PC-3 (cell line): ENCODE measurements at regions of chr14 and their contacts with region 1.

Region 1: DNA sequence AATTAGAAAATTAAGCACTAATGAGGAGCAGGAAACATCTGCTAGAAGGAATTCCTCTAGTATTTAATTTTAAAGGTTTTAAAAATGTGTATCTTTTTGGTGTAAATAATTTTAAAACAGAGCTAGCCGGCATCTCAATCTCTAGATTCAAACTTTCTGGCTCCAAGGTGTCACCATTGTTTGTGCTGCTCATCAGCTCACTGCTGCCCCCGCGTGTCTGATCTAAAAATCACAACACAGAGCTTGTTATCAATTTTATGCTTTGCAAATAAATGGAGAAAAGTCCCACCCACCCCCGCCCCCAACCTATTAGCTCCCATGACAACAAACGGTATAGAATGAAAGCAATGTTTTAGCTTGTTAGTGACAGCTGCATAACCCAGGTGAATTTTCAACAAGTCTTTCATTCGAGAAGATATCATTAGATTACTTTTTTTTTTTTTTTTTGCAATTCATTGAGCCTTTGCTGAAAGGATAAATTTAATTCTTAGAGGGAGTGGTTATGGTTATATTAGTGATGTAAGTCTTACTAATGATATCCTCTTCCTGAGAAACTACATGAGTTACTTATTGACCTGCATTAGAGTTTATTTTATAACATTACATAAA is 11.3 kb upstream of the ABHD12B start:
- DNase-seq: peak; percentile 96
- ATAC-seq: peak; percentile 66
- H3K4me3 ChIP-seq: peak overlapping the region; percentile 82
- H3K27ac ChIP-seq: peak overlapping the region; percentile 34
- H3K4me1 ChIP-seq: peaks cover 13% of the 10 kb centered on the region
- H3K27me3 ChIP-seq: no peaks in the 10 kb centered on the region
- CTCF ChIP-seq: peak; percentile 72; the same call in 1 of the 2 replicates

Region 2: GRCh38 chr14:50608302-50608851 is 252.2 kb before region 1 on chr14:
- CTCF ChIA-PET with region 1: interaction called, 21 read pairs
- POLR2A ChIA-PET with region 1: no interaction called
- intact Hi-C with region 1: no loop called
- DNase-seq: no peak
- ATAC-seq: no peak
- H3K4me3 ChIP-seq: no peak overlapping the region
- H3K27ac ChIP-seq: no peak overlapping the region
- H3K4me1 ChIP-seq: no peaks in the 10 kb centered on the region
- H3K27me3 ChIP-seq: no peaks in the 10 kb centered on the region
- CTCF ChIP-seq: no peak

Region 3: DNA sequence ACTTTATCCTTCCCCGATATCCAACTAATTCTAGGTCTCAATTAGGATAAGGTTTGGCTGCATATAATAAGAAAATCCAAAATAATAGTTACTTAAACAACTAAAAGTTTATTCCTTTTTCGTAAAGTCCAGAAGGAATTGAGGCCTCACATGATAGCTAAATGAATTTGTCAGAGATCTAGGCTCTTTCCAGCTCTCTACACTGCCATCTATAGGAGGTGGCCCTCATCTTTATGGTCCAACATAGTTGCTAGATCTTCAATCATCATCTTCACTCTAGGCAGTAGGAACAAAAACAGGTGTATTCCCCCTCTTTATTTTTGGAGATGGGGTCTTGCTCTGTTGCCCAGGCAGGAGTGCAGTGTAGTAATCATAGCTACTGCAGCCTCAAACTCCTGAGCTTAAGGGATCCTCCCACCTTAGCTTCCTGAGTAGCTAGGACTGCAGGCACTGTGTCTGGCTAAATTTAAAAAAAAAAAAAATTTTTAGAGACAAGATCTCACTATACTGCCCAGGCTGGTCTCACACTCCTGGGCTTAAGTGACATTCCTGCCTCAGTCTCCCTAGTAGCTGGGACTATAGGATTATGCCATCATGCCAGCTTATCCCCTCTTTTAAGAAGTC is 146.0 kb before region 1 on chr14:
- CTCF ChIA-PET with region 1: interaction called, 12 read pairs
- POLR2A ChIA-PET with region 1: no interaction called
- intact Hi-C with region 1: no loop called
- DNase-seq: peak; percentile 67
- ATAC-seq: peak; percentile 93
- H3K4me3 ChIP-seq: no peak overlapping the region
- H3K27ac ChIP-seq: no peak overlapping the region
- H3K4me1 ChIP-seq: no peaks in the 10 kb centered on the region
- H3K27me3 ChIP-seq: no peaks in the 10 kb centered on the region
- CTCF ChIP-seq: peak; percentile 79

Region 4: GRCh38 chr14:50773632-50774541 is 86.7 kb before region 1 on chr14:
- CTCF ChIA-PET with region 1: interaction called, 84 read pairs
- POLR2A ChIA-PET with region 1: interaction called, 13 read pairs
- intact Hi-C with region 1: loop called (anchors 1 kb)
- DNase-seq: peak; percentile 91
- ATAC-seq: peak; percentile 58
- H3K4me3 ChIP-seq: no peak overlapping the region
- H3K27ac ChIP-seq: 0 out of 2 replicates have a peak overlapping the region, but pooled peaks have one; percentile 83
- H3K4me1 ChIP-seq: peaks cover 55% of the 10 kb centered on the region
- H3K27me3 ChIP-seq: no peaks in the 10 kb centered on the region
- CTCF ChIP-seq: peak; percentile 99

Region 5: DNA sequence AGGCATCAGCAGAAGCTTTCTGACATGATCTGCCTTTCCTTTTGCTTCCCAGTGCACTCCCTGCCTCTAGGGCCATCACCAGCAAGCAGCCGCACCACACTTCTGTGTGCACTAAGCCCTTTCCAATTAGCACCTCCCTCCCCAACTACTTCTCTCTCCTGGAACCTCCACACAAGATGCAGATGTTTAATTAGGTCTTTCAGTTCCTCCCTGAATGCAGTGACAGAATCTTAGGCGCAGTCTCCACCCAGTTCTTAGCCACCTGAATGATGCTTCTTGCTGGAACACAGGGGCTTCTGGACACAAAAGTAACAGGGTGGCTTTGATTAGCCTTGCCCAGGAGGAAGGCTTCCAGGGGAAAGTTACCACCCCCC is 62.5 kb before region 1 on chr14:
- CTCF ChIA-PET with region 1: interaction called, 9 read pairs
- POLR2A ChIA-PET with region 1: interaction called, 4 read pairs
- intact Hi-C with region 1: loop called (anchors 1 kb)
- DNase-seq: no peak
- ATAC-seq: no peak
- H3K4me3 ChIP-seq: no peak overlapping the region
- H3K27ac ChIP-seq: no peak overlapping the region
- H3K4me1 ChIP-seq: peaks cover 35% of the 10 kb centered on the region
- H3K27me3 ChIP-seq: no peaks in the 10 kb centered on the region
- CTCF ChIP-seq: no peak

Region 6: GRCh38 chr14:50882953-50883826 is 22.6 kb after region 1 on chr14:
- CTCF ChIA-PET with region 1: interaction called, 11 read pairs
- POLR2A ChIA-PET with region 1: no interaction called
- intact Hi-C with region 1: no loop called
- DNase-seq: peak; percentile 58
- ATAC-seq: peak; percentile 7; the same call in 1 of the 2 replicates
- H3K4me3 ChIP-seq: no peak overlapping the region
- H3K27ac ChIP-seq: peak overlapping the region; percentile 67
- H3K4me1 ChIP-seq: peaks cover 18% of the 10 kb centered on the region
- H3K27me3 ChIP-seq: no peaks in the 10 kb centered on the region
- CTCF ChIP-seq: no peak